ENCODE measurements at regions of chr1 and their contacts with region 1.

Region 1: DNA sequence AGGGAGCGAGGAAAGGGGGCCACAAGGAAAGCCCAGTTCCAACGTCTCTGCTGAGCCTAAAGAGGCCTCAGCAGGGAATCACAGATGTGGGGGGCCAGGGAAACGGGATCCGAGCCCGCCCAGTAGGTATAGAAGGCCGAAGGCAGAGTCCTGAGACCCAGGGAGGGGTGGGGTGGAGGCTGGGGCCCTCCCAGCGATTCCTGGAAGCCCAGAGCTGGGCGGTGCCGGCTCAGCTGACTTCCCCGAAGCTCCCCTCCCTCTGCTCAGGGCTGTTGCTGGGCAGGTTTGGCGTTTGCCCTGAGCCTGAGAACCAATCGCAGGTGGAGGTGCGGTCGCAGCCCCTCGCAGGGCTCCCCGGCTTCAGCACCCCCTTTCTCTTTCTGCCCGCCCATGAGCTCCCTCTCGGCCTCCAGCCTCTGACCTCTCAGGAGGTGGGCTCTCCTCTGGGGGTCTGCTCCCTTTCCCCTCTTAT is 12.8 kb downstream of the ADAMTSL4 start:
- DNase-seq: peak; percentile 98
- H3K4me3 ChIP-seq: peak overlapping the region; percentile 39 to 59 (median 56)
- H3K27ac ChIP-seq: peak overlapping the region; percentile 95 to 99 (median 98)
- H3K4me1 ChIP-seq: peaks cover 0 to 93% (median 81%) of the 10 kb centered on the region in 4 donors
- H3K27me3 ChIP-seq: no peaks in the 10 kb centered on the region
- CTCF ChIP-seq: no peak
- EP300 ChIP-seq: peak in 3 of 4 donors; percentile 68 to 95 (median 88)
- POLR2A ChIP-seq: peak in 1 of 2 donors; percentile 23

Region 2: DNA sequence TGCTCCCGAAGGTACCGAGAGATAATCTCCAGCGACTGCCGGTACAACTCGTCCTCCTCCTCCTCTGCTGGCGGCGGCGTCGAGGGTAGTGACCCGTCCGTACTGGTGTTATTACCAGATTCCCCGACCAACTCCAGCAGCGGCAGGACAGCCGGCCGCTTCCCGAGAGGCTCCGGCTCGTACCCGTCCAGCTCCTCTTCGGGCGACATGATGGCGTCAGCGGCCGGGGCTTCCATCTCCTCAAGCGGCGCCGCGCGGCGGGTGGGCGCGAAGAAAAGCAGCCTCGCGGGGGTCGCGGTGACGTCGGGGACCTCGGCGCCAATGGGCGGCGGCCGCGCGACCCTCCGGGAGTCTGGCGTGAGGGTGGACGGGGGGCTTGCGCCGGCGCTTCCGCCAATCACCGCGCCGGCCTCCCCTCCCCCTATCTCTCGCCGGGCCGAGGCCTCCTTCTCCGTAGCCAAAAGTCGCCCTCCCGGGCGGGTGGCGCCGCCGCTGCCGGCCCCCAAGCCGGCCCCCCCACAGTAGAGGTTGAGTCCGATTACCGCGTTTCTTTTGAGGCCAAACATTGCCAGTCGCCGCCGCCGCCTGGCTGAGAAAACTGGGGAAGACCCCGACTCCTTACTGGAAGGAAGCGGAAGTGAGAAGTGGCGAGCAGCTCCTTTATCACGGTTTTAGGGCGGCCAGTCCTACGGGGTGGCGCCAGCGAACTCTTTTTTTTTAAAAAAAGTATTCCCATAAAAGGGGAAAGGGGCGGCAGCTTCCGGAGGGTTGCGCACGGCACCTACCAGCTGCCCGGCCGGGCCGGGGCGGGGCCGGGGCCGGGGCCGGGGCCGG is 17.2 kb after region 1 on chr1 and contains the start of gene MCL1:
- intact Hi-C with region 1: loop called (anchors 1 kb)
- DNase-seq: peak; percentile 98
- H3K4me3 ChIP-seq: peak within 1 kb of the TSS; percentile 77 to 98 (median 94)
- H3K27ac ChIP-seq: peak within 1 kb of the TSS; percentile 95 to 99 (median 97)
- H3K4me1 ChIP-seq: peaks cover 4 to 46% (median 32%) of the 10 kb centered on the region in 4 donors
- H3K27me3 ChIP-seq: no peaks in the 10 kb centered on the region
- CTCF ChIP-seq: no peak
- EP300 ChIP-seq: peak in 2 of 4 donors; percentile 11 to 44
- POLR2A ChIP-seq: peak; percentile 97 to 98
- total RNA-seq, gene MCL1: 159 to 352 (median 212) TPM

Region 3: GRCh38 chr1:150696590-150697524 is 134.8 kb after region 1 on chr1 and contains the start of gene GOLPH3L:
- intact Hi-C with region 1: loop called (anchors 10 kb)
- DNase-seq: peak; percentile 98
- H3K4me3 ChIP-seq: peak within 1 kb of the TSS; percentile 60 to 73 (median 64)
- H3K27ac ChIP-seq: peak within 1 kb of the TSS; percentile 79 to 80 (median 79)
- H3K4me1 ChIP-seq: peaks cover 0 to 24% (median 6%) of the 10 kb centered on the region in 4 donors
- H3K27me3 ChIP-seq: no peaks in the 10 kb centered on the region
- CTCF ChIP-seq: no peak
- EP300 ChIP-seq: no peak
- POLR2A ChIP-seq: peak in 1 of 2 donors; percentile 58
- total RNA-seq, gene GOLPH3L: 18.1 to 27.2 (median 20.7) TPM

Region 4: DNA sequence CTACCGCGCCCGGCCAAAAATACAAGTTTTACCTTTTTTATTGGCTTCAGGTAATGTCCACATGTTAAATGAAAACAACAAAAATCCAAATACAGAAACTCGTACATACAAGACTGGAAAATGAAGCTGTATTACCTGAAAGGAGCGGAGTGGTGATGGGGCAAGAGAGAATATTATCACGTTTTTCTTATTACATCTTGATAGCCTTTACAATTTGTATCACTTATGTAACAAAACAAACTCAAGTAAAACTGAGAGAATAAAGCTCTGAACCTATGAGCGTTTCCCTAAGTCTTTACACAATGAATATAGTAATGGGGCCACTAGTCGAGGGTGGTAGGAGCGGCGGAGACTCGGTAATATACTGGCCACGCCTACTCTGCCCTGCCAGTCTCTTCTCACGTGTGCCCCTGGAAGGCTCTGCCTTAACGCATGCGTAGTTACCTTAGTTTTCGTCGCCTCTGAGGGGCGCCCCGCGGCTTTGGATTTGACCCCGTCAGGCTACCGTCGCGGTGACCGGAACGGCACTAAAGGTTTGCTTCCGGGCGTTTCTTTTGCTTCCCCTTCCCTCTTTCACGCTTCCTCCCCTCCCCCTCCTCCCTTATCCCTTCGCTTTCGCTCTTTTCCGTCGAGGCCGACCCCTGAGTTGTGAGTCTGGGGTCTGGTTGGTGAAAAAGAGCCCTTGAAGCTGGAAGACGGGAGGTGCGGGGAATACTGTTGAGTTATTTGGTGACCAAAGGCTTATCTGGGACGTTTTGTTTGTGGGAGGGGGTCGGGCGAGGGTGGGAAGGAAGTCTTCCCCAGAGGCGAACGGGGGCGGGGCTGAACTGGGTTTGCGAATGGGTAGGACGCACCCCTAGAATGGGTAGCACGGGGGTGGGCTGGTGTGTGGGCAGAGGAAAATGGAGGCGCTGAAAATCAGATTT is 364.1 kb after region 1 on chr1 and contains the start of gene SETDB1:
- intact Hi-C with region 1: loop called (anchors 10 kb)
- DNase-seq: peak; percentile 98
- H3K4me3 ChIP-seq: peak within 1 kb of the TSS; percentile 77 to 90 (median 86)
- H3K27ac ChIP-seq: peak within 1 kb of the TSS; percentile 80 to 94 (median 88)
- H3K4me1 ChIP-seq: peaks cover 0 to 15% (median 13%) of the 10 kb centered on the region in 4 donors
- H3K27me3 ChIP-seq: no peaks in the 10 kb centered on the region
- CTCF ChIP-seq: no peak
- EP300 ChIP-seq: peak in 1 of 4 donors; percentile 74
- POLR2A ChIP-seq: no peak
- total RNA-seq, gene SETDB1: 23.9 to 36.0 (median 30.3) TPM

Measured in sigmoid colon (tissue), 7 donors.